ENCODE measurements at regions of chr17 and their contacts with region 1.

Region 1: GRCh38 chr17:48335858-48336500 is 94.0 kb downstream of the SKAP1 start:
- DNase-seq: peak; percentile 14 to 64 (median 29)
- ATAC-seq: peak; percentile 65
- H3K4me3 ChIP-seq: no peak overlapping the region
- H3K27ac ChIP-seq: no peak overlapping the region
- H3K4me1 ChIP-seq: no peaks in the 10 kb centered on the region
- H3K27me3 ChIP-seq: no peaks in the 10 kb centered on the region
- CTCF ChIP-seq: peak; percentile 57 to 87 (median 65); a peak in 4 of 6 replicates
- EP300 ChIP-seq: no peak
- POLR2A ChIP-seq: no peak
- RAD21 ChIP-seq: peak; percentile 82 to 92

Region 2: DNA sequence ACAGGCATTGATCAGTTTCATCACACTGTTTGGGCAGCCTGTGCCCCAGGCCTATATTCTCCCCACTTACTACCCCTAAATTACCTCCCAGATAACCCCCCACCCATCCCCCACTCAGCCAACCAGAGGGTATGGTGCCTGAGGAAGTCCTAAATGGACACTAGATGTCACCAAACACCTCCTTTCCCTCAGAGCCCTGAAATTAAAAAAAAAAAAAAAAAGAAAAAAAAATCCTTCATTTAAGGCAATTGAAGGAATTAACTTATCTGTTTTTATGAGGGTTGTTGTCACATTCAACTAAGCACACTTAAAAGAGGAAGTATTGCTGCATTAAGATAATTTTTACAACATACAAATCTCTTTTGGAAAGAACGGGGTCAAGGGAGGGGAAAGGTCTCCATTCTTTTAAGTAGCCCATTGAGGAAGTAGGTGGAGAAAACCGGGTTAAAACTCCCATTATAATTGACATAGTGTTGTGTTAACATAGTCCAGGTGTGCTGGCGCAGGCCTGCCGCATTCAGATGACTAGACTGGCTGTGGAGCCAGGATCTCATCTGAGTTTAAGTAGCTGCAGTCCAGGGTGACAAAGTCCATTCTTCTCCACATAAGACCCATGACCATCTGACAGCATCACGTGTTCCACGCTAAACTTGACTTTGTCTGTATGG is 182.2 kb before region 1 on chr17:
- CTCF ChIA-PET with region 1: no interaction called
- POLR2A ChIA-PET with region 1: no interaction called
- in situ Hi-C with region 1: no loop called
- intact Hi-C with region 1: loop called (anchors 5 kb)
- DNase-seq: peak; percentile 62 to 70 (median 68)
- ATAC-seq: peak; percentile 79
- H3K4me3 ChIP-seq: no peak overlapping the region
- H3K27ac ChIP-seq: no peak overlapping the region
- H3K4me1 ChIP-seq: peaks cover 4 to 10% of the 10 kb centered on the region in 2 experiments
- H3K27me3 ChIP-seq: peaks cover 4% of the 10 kb centered on the region in 2 experiments; a peak in 2 of 5 replicates
- CTCF ChIP-seq: peak; percentile 58 to 76 (median 68); a peak in 5 of 6 replicates
- EP300 ChIP-seq: no peak
- POLR2A ChIP-seq: no peak
- RAD21 ChIP-seq: peak; percentile 45 to 54

Region 3: DNA sequence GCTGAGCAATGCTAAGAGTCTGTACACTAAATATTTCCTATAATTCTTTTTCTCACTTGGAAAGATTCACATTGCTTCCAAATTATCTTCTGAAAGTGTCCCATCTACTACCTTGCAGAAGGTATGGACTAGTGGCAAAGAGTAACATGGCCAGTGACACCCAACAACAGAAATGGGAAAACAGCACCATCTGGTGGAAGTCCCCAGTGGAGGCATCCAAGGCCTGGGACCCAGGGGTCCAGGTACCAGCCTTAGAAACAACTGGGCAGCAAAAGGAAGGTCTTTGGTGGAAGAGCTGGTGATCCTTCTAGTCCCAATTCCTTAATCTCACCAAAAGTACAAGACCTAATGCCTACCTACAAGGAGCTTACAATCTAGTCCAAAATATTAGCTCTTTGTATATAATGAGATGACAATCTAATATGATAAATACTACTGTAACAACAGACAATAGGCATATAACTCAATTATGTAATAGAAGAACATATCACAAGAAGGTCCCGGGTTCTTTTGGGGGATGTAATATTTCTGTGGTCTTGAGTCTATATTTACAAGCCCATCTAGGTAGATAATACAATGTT is 38.8 kb after region 1 on chr17:
- CTCF ChIA-PET with region 1: no interaction called
- POLR2A ChIA-PET with region 1: interaction called, 3 read pairs
- in situ Hi-C with region 1: no loop called
- intact Hi-C with region 1: loop called (anchors 1 kb)
- DNase-seq: peak; percentile 41 to 73 (median 65)
- ATAC-seq: peak; percentile 95
- H3K4me3 ChIP-seq: no peak overlapping the region
- H3K27ac ChIP-seq: no peak overlapping the region
- H3K4me1 ChIP-seq: peaks cover 0 to 12% of the 10 kb centered on the region in 2 experiments; a peak in 3 of 5 replicates
- H3K27me3 ChIP-seq: no peaks in the 10 kb centered on the region
- CTCF ChIP-seq: peak; percentile 83 to 89 (median 88)
- EP300 ChIP-seq: no peak
- POLR2A ChIP-seq: no peak
- RAD21 ChIP-seq: peak; percentile 62 to 90

Region 4: DNA sequence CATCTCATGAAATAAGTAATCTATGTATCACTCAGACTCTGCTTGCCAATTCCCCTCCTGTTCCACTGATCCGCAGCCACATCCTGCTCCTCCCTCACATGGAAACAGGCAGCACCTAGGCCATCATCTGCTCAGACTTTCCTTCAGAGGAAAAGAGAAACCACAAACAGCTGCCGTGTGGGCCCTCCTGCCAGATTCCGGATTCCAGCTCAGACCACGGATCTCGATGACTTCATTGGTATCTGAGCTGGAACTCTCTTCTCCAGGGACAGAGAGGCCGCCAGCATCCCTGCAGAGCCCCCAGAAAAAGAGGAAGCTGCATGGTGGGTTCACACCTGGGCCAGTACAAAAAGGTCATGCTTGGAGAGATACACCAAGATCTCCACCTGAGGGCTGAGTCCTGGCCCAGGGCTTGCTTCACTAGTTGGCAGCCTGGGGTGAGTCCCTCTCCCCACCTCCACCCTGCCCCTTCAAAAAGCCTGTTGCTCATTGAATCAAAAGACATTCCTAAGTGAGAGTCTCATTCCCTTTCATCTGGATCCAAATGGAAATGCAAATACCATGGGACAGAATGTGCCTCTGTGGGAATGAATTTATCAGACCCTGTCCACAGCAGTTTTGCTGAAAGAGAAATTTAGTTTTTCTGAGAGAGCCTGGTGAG is 147.6 kb after region 1 on chr17:
- CTCF ChIA-PET with region 1: no interaction called
- POLR2A ChIA-PET with region 1: no interaction called
- in situ Hi-C with region 1: no loop called
- intact Hi-C with region 1: no loop called
- DNase-seq: peak in 3 of 4 experiments; percentile 25 to 56 (median 27)
- ATAC-seq: peak; percentile 15; the same call in 2 of the 3 replicates
- H3K4me3 ChIP-seq: no peak overlapping the region
- H3K27ac ChIP-seq: no peak overlapping the region
- H3K4me1 ChIP-seq: peaks cover 5 to 49% of the 10 kb centered on the region in 2 experiments; a peak in 4 of 5 replicates
- H3K27me3 ChIP-seq: no peaks in the 10 kb centered on the region
- CTCF ChIP-seq: no peak
- EP300 ChIP-seq: peak; percentile 20; the same call in 1 of the 2 replicates
- POLR2A ChIP-seq: no peak
- RAD21 ChIP-seq: no peak

Region 5: GRCh38 chr17:48593840-48594537 is 258.0 kb after region 1 on chr17:
- CTCF ChIA-PET with region 1: interaction called, 19 read pairs
- POLR2A ChIA-PET with region 1: interaction called, 6 read pairs
- in situ Hi-C with region 1: loop called (anchors 5 kb)
- intact Hi-C with region 1: no loop called
- DNase-seq: peak; percentile 84 to 87 (median 86)
- ATAC-seq: peak; percentile 92
- H3K4me3 ChIP-seq: no peak overlapping the region
- H3K27ac ChIP-seq: no peak overlapping the region
- H3K4me1 ChIP-seq: peaks cover 14 to 46% of the 10 kb centered on the region in 2 experiments; a peak in 4 of 5 replicates
- H3K27me3 ChIP-seq: no peaks in the 10 kb centered on the region
- CTCF ChIP-seq: peak; percentile 94 to 95 (median 94)
- EP300 ChIP-seq: no peak
- POLR2A ChIP-seq: no peak
- RAD21 ChIP-seq: peak; percentile 73 to 95